ENCODE measurements at regions of chr11 and their contacts with region 1.

Region 1: GRCh38 chr11:17164361-17165246 is 43.2 kb downstream of the PIK3C2A start:
- DNase-seq: no peak
- H3K4me3 ChIP-seq: no peak overlapping the region
- H3K27ac ChIP-seq: no peak overlapping the region
- H3K4me1 ChIP-seq: peaks cover 5% of the 10 kb centered on the region
- H3K27me3 ChIP-seq: no peaks in the 10 kb centered on the region
- CTCF ChIP-seq: no peak
- EP300 ChIP-seq: no peak
- POLR2A ChIP-seq: no peak

Region 2: DNA sequence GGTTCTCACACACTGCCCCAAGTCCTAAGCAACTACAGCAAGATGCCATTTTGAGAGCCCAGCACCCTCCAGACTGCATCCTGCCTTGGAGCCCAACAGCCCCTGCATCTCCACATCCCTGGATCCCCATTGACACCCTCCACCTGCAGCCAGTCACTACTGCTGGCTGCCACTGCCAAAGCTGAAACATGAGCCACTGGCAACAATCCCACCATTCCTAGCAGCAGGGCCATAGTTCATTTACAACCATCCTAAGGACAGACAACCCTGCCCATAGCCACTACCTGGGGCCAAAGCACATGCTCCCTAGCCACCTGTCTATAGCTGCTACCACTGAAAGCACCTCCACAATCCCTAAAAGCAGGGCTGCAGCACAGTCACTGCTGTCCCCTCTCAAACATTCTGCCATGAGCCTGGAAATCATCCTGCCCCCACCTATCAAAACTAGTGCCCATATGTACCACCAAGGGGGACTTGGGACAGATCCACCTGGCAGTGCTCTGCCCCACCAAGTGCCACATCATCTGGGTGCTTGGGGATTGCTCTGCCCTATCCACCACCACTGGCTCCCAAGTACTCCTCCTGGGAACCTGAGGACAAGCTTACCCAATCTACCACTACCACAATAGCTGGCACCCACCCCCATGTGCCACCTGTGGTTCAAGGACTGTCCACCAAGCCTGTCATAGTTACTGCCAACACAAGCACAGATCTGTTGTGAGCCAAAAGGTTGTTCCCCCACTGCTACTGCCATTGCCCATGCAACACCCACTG is 669.5 kb before region 1 on chr11:
- intact Hi-C with region 1: loop called in 1 of 4 experiments (anchors 5 kb)
- DNase-seq: no peak
- H3K4me3 ChIP-seq: no peak overlapping the region
- H3K27ac ChIP-seq: no peak overlapping the region
- H3K4me1 ChIP-seq: no peaks in the 10 kb centered on the region
- H3K27me3 ChIP-seq: no peaks in the 10 kb centered on the region
- CTCF ChIP-seq: no peak
- EP300 ChIP-seq: no peak
- POLR2A ChIP-seq: no peak

Region 3: GRCh38 chr11:17244046-17244445 is 79.4 kb after region 1 on chr11:
- intact Hi-C with region 1: no loop called
- DNase-seq: no peak
- H3K4me3 ChIP-seq: no peak overlapping the region
- H3K27ac ChIP-seq: no peak overlapping the region
- H3K4me1 ChIP-seq: no peaks in the 10 kb centered on the region
- H3K27me3 ChIP-seq: no peaks in the 10 kb centered on the region
- CTCF ChIP-seq: no peak
- EP300 ChIP-seq: no peak
- POLR2A ChIP-seq: no peak